B cell (primary cell): ENCODE measurements at regions of chr1 and their contacts with region 1.

Region 1: DNA sequence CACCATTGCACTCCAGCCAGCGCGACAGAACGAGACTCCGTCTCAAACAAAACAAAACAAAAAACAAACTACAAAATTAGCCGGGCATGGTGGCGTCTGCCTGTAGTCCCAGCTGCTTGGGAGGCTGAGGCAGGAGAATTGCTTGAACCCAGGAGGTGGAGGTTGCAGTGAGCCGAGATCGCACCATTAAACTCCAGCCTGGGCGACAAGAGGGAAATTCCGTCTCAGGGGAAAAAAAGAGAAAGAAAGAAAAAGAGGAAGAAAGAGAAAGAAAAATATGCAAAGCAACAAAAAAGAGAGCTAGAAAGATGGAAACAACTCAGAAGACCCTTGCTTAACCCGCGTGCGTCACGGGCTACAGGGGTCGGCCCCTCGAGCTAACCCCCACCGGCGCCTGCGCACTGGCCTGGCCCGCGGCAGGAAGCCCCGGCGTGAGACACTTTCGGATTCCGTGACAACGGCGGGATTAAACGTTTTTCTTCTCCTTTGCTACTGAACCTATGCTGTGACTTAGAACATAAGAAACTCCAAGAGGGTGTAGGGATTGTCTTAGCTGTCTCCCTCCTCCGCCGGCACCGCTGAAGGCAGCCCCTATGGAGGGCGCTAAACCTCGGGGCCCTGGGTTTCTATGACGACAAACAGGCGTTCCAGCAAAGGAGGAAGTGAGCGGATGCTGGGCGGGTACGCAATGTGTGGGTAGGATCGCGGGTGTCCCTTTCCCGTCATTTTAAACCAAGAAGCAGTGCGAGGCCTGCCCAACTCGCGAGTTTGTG is at the start of gene AXDND1:
- DNase-seq: peak; percentile 97
- ATAC-seq: peak; percentile 90
- H3K4me3 ChIP-seq: peak within 1 kb of the TSS; percentile 59 to 85 (median 74)
- H3K4me3 Mint-ChIP-seq: peak within 1 kb of the TSS; percentile 97
- H3K27ac ChIP-seq: peak within 1 kb of the TSS; percentile 93 to 100
- H3K27ac Mint-ChIP-seq: peak within 1 kb of the TSS; percentile 99
- H3K4me1 ChIP-seq: peaks cover 4 to 12% of the 10 kb centered on the region in 2 donors
- H3K4me1 Mint-ChIP-seq: peaks cover 7% of the 10 kb centered on the region
- H3K27me3 ChIP-seq: no peaks in the 10 kb centered on the region
- H3K27me3 Mint-ChIP-seq: no peaks in the 10 kb centered on the region
- CTCF ChIP-seq: no peak
- total RNA-seq, gene AXDND1: 0.90 and 1.1 TPM in 2 replicates

Region 2: DNA sequence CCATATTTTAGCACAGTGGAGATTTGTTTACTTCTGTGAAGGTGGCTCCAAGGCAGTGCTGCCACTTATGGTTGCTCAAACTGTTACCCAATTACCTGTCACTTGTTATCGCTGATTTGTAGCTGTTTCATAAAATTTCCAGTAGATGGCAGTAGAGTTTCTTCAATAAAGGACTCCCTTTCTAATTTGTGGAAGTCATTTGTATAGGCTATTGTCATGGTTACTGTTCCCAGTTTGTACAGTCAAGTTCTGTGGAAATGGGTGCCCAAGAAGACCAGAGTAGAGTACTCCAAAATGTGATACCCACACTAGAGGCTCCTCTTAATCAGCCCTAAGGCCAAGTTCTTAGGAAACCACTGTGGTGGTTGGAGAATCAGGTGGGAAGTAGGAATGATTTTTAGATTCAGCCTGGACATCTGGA is 1054.8 kb before region 1 on chr1:
- CTCF ChIA-PET with region 1: interaction called, 7 read pairs
- POLR2A ChIA-PET with region 1: no interaction called
- intact Hi-C with region 1: loop called (anchors 1 kb)
- DNase-seq: peak; percentile 70
- ATAC-seq: peak; percentile 45
- H3K4me3 ChIP-seq: no peak overlapping the region
- H3K4me3 Mint-ChIP-seq: no peak overlapping the region
- H3K27ac ChIP-seq: no peak overlapping the region
- H3K27ac Mint-ChIP-seq: no peak overlapping the region
- H3K4me1 ChIP-seq: no peaks in the 10 kb centered on the region
- H3K4me1 Mint-ChIP-seq: no peaks in the 10 kb centered on the region
- H3K27me3 ChIP-seq: peaks cover 0 to 3% (median 0%) of the 10 kb centered on the region in 4 experiments
- H3K27me3 Mint-ChIP-seq: peaks cover 10% of the 10 kb centered on the region
- CTCF ChIP-seq: peak; percentile 82

Region 3: DNA sequence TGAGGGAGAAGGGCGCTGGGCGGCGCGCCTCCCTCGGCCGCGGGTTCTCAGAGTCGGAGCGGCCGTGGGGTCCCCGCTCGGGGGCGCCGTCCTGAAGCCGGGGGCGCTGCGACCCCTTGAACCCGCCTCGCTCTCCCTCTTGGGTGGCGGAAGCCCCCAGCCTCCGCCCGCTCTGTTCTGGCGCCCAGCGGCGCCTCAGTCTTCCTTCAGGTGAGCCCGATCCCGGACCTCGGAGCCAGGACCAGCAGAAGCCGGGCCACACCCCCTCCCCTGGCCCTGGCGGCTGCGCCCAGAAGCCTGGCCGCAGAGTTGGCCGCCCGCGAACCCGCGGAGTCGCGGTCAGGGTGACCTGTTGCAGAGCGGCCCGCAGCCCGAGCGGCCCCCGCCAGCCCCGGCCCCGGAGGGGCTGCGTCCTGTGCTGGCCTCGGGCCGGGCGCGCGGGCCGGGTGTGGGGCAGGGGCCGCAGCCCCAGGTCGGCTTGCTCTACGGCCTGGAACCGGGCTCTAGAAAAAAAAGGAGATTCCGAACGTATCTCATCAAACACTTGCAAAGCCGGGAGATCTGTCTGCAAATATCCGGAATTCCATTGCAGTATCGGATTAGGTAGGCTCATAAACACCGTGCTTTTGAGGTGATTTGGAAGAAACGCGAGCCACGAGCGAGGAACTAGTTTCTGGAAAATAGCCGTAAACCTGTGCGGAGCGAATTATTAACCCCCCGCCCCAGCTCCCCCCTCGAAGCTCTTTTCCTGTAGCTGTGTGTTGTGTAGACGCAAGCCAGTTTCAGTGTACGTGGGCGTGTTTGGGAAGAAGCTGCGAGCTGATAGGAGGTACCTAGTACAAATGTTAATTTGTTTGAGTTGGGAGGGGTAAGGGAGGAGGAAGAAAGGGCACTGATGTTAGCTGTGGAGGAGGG is 639.6 kb before region 1 on chr1:
- CTCF ChIA-PET with region 1: no interaction called
- POLR2A ChIA-PET with region 1: no interaction called
- intact Hi-C with region 1: loop called (anchors 5 kb)
- DNase-seq: peak; percentile 89
- ATAC-seq: peak; percentile 68
- H3K4me3 ChIP-seq: peak overlapping the region; percentile 70 to 99 (median 79)
- H3K4me3 Mint-ChIP-seq: peak overlapping the region; percentile 96
- H3K27ac ChIP-seq: peak overlapping the region; percentile 78 to 90
- H3K27ac Mint-ChIP-seq: peak overlapping the region; percentile 94
- H3K4me1 ChIP-seq: peaks cover 28 to 33% of the 10 kb centered on the region in 2 donors
- H3K4me1 Mint-ChIP-seq: peaks cover 52% of the 10 kb centered on the region
- H3K27me3 ChIP-seq: no peaks in the 10 kb centered on the region
- H3K27me3 Mint-ChIP-seq: no peaks in the 10 kb centered on the region
- CTCF ChIP-seq: no peak

Region 4: GRCh38 chr1:179121159-179121938 is 244.2 kb before region 1 on chr1:
- CTCF ChIA-PET with region 1: interaction called, 74 read pairs
- POLR2A ChIA-PET with region 1: interaction called, 4 read pairs
- intact Hi-C with region 1: loop called (anchors 1 kb)
- DNase-seq: peak; percentile 48
- ATAC-seq: no peak
- H3K4me3 ChIP-seq: no peak overlapping the region
- H3K4me3 Mint-ChIP-seq: no peak overlapping the region
- H3K27ac ChIP-seq: no peak overlapping the region
- H3K27ac Mint-ChIP-seq: peak overlapping the region; percentile 6
- H3K4me1 ChIP-seq: no peaks in the 10 kb centered on the region
- H3K4me1 Mint-ChIP-seq: peaks cover 5% of the 10 kb centered on the region
- H3K27me3 ChIP-seq: no peaks in the 10 kb centered on the region
- H3K27me3 Mint-ChIP-seq: no peaks in the 10 kb centered on the region
- CTCF ChIP-seq: peak; percentile 55

Region 5: GRCh38 chr1:179229214-179230140 is 136.0 kb before region 1 on chr1 and contains the start of gene ABL2:
- CTCF ChIA-PET with region 1: no interaction called
- POLR2A ChIA-PET with region 1: interaction called, 4 read pairs
- intact Hi-C with region 1: loop called (anchors 2 kb)
- DNase-seq: peak; percentile 73
- ATAC-seq: peak; percentile 72
- H3K4me3 ChIP-seq: peak within 1 kb of the TSS; percentile 62 to 87 (median 85)
- H3K4me3 Mint-ChIP-seq: peak within 1 kb of the TSS; percentile 93
- H3K27ac ChIP-seq: peak within 1 kb of the TSS in 1 of 2 donors; percentile 74
- H3K27ac Mint-ChIP-seq: peak within 1 kb of the TSS; percentile 89
- H3K4me1 ChIP-seq: peaks cover 7 to 13% of the 10 kb centered on the region in 2 donors
- H3K4me1 Mint-ChIP-seq: peaks cover 29% of the 10 kb centered on the region
- H3K27me3 ChIP-seq: no peaks in the 10 kb centered on the region
- H3K27me3 Mint-ChIP-seq: no peaks in the 10 kb centered on the region
- CTCF ChIP-seq: no peak
- total RNA-seq, gene ABL2: 20.0 and 20.7 TPM in 2 replicates

Region 6: DNA sequence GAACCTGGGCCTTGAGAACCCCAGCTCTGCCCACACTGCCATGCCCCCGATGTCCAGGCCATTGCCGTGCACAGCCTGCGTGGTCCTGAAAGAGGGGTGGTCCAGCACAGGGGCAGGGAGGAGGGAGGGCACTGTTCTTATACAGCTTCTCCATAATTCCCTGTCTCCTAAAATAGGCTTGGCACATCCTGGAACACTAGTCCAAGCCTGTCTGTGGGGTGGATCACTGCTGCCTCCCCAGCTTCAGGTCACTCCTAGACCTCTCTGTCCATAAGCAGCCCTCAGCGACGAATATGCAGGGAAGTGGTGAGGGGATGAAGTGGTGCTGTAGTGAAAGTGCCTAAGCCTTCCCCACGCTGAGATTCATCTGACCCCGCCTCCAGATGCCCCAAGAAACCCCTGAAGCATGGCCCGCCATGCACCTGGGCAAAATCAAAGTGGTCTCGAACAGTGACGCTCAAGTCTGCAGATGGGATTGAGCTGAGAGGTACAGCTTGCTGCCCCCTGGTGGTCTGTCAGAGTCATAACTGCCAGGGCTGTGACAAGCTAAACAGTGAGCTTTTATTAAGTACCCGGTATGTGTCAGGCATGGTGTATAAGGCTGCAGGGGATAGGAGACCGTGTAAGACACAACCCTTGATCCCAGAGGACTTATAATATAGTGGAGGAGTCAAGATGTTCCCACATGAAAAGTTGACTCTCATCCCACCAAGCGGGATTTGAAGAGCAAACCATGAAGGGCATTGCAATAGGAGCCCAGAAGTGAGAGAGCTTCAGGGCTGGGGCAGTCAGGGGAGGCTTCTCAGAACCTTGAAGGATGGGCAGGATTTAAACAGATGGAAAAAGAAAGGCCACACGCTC is 444.2 kb after region 1 on chr1:
- CTCF ChIA-PET with region 1: no interaction called
- POLR2A ChIA-PET with region 1: no interaction called
- intact Hi-C with region 1: loop called (anchors 5 kb)
- DNase-seq: peak; percentile 78
- ATAC-seq: peak; percentile 70
- H3K4me3 ChIP-seq: no peak overlapping the region
- H3K4me3 Mint-ChIP-seq: no peak overlapping the region
- H3K27ac ChIP-seq: no peak overlapping the region
- H3K27ac Mint-ChIP-seq: no peak overlapping the region
- H3K4me1 ChIP-seq: peaks cover 6 to 13% of the 10 kb centered on the region in 2 donors
- H3K4me1 Mint-ChIP-seq: peaks cover 7% of the 10 kb centered on the region
- H3K27me3 ChIP-seq: peaks cover 0 to 15% (median 4%) of the 10 kb centered on the region in 4 experiments
- H3K27me3 Mint-ChIP-seq: peaks cover 21% of the 10 kb centered on the region
- CTCF ChIP-seq: peak; percentile 90